ENCODE measurements at regions of chr12 and their contacts with region 1.

Region 1: DNA sequence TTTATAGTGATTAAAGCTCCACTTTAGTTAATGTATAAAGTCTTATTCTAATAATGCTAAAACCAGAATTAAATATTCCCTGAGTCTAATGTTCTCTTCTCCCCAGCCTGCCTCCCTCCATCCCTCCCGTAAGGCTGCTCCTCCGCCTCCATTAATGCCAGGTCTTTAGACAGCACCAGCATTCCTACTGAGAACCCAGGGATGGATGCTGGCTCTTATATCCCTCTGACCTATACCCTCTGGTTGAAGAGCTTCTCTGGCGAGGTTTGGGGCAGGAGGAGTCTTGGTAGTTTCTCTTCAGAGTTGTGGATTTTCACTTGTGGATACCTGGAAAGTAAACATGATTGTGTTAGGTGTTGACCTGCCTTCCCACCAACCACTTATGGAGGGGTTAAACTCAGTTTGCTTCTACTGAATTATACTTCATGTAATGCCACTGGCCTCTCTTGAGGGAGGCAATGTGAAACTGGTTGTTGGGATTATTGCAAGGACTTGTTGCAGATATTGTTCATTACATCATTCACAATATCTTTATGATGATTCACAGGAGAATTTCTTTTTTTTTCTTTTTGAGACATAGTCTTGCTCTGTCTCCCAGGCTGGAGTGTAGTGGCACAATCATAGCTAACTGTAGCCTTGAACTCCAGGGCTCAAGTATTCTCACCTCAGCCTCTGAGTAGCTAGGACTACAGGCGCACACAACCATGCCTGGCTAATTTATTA is 11.1 kb upstream of the SMAGP start:
- DNase-seq: no peak
- H3K4me3 ChIP-seq: no peak overlapping the region
- H3K4me3 Mint-ChIP-seq: no peak overlapping the region
- H3K27ac ChIP-seq: no peak overlapping the region
- H3K27ac Mint-ChIP-seq: peak overlapping the region in 3 of 8 donors; percentile 0 to 70 (median 39)
- H3K4me1 ChIP-seq: no peaks in the 10 kb centered on the region
- H3K4me1 Mint-ChIP-seq: peaks cover 0 to 2% (median 0%) of the 10 kb centered on the region in 3 donors
- H3K27me3 ChIP-seq: no peaks in the 10 kb centered on the region
- H3K27me3 Mint-ChIP-seq: no peaks in the 10 kb centered on the region

Region 2: DNA sequence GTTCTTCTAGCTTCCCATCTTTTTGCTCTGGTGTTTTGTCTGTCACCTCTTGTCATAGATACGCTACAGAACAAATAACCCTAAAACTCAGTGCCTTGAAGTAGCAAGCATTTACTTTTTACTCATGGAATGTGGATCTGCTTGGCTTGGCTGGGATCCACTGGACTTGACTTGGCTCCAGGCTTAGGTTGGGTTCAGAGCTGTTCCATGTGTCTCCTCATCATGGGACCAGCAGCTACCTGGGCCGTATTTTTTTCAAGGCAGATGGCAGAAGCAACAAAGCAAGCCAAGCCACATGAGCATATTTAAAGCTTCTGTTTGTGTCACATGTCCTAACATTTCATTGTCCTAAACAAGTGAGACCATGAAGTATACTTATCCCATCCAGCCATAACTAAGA is 566.2 kb before region 1 on chr12:
- CTCF ChIA-PET with region 1: no interaction called
- POLR2A ChIA-PET with region 1: interaction called, 10 read pairs
- DNase-seq: no peak
- H3K4me3 ChIP-seq: no peak overlapping the region
- H3K4me3 Mint-ChIP-seq: no peak overlapping the region
- H3K27ac ChIP-seq: no peak overlapping the region
- H3K27ac Mint-ChIP-seq: peak overlapping the region in 3 of 8 donors; percentile 2 to 46 (median 24)
- H3K4me1 ChIP-seq: no peaks in the 10 kb centered on the region
- H3K4me1 Mint-ChIP-seq: no peaks in the 10 kb centered on the region
- H3K27me3 ChIP-seq: no peaks in the 10 kb centered on the region
- H3K27me3 Mint-ChIP-seq: no peaks in the 10 kb centered on the region

Region 3: DNA sequence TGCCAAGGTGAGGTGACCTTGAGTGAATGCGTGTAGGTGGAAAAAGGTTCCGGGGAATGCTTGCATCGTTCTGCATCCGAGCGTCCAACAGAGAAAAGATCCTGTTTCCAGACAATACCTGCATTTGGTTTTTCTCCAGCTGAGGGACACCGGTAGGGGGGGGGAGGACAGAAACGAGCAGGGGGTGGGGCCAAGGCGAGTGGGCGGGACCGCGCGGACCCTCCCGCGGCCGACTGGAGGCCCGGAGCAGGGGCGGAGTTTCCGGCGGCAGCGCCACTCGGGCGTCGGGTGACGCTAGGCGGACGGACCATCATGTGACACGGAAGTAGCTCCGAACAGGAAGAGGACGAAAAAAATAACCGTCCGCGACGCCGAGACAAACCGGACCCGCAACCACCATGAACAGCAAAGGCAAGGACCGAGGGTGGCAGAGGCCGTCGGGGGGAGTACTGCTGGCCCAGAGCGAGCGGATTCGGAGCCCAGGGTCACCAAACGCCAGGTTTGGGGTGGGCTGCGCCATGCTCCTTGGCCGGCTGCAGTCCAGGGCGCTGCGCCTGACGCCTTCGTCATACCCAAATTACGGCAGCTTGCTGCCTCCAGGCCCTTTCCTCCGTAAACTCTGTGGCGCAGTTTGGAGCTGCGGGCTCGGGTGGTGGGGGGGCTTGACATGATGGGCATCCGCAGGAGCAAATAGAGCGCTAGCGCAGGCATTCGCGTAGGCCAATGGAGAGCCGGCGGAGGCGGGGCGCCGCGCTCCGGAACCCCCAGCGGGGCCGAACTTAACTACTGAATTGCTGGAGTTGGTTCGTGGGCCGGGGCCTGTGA is 42.6 kb before region 1 on chr12 and contains the start of gene DAZAP2:
- CTCF ChIA-PET with region 1: no interaction called
- POLR2A ChIA-PET with region 1: no interaction called
- DNase-seq: peak; percentile 91 to 97 (median 95)
- H3K4me3 ChIP-seq: peak within 1 kb of the TSS; percentile 96
- H3K4me3 Mint-ChIP-seq: peak within 1 kb of the TSS; percentile 94 to 100 (median 98)
- H3K27ac ChIP-seq: peak within 1 kb of the TSS; percentile 100
- H3K27ac Mint-ChIP-seq: peak within 1 kb of the TSS; percentile 99 to 100 (median 100)
- H3K4me1 ChIP-seq: peaks cover 32% of the 10 kb centered on the region
- H3K4me1 Mint-ChIP-seq: peaks cover 39 to 46% (median 45%) of the 10 kb centered on the region in 3 donors
- H3K27me3 ChIP-seq: no peaks in the 10 kb centered on the region
- H3K27me3 Mint-ChIP-seq: peaks cover 3% of the 10 kb centered on the region in 2 donors
- total RNA-seq, gene DAZAP2: 97.2 to 100 TPM

Measured in CD8-positive, alpha-beta memory T cell (primary cell).